Mammary epithelial cell (primary cell): ENCODE measurements at regions of chr13 and their contacts with region 1.

Region 1: DNA sequence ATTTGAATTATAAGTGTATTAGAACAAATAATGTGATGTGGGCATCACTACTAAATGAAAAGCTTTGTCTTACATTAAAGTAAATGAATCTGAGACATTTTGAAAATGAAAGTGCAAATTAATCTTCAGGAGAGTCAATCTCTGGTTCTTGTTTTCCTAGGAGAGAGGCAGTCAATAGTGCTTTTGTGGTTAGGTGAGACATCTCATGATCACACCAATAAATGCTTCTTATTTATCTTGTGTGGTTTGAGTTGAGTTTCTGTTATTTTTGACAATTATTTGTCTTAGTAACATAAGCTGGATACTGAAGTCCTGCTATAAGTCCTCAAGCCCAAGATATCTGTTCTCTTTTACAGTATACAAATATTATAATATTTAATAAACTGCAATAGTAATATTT is 1378.0 kb upstream of the PCDH9 start:
- DNase-seq: no peak
- H3K4me3 ChIP-seq: no peak overlapping the region
- H3K27ac ChIP-seq: no peak overlapping the region
- H3K4me1 ChIP-seq: no peaks in the 10 kb centered on the region
- H3K27me3 ChIP-seq: no peaks in the 10 kb centered on the region
- CTCF ChIP-seq: no peak

Region 2: GRCh38 chr13:68467160-68467559 is 141.0 kb before region 1 on chr13:
- CTCF ChIA-PET with region 1: no interaction called
- dilution Hi-C with region 1: no loop called
- in situ Hi-C with region 1: no loop called
- intact Hi-C with region 1: no loop called
- DNase-seq: no peak
- H3K4me3 ChIP-seq: no peak overlapping the region
- H3K27ac ChIP-seq: no peak overlapping the region
- H3K4me1 ChIP-seq: no peaks in the 10 kb centered on the region
- H3K27me3 ChIP-seq: no peaks in the 10 kb centered on the region
- CTCF ChIP-seq: no peak

Region 3: DNA sequence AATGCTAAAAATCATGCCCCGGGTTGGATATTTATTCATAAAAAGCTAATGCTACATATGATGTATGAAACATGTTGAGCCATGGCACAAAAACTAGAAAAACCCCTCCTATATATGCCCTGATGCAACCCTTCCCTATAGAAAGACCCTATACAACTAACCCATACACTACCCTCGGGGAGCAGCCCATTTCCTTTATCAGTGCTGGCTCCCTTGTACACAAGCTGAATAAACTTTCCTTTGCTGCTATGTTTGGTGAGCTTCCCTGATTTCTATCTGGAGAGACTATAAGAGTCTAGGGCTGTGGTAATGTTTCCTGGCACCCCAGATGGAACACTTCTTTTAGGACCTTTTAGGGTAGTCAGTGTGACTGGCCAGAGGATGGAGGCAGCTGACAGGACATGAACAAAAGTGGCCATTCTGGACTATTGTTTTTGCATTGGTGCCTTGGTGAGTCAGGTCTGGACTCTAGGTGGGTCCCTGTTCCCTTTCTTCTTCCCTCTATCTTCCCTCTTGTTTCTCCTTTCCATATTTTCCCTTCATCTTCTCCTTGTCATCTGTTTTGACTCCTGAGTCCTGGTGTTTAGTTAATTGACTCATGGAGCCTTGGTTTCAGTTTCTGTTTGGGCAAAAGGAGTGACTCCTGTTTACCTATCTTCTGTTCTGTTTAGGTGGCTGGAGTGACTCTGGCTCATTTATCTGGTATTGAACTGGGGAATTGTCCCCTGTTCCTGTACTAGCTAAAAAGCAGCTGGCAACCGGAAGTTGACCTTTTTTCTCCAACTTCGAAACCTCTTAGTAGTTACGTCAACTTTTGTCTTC is 56.2 kb before region 1 on chr13:
- CTCF ChIA-PET with region 1: no interaction called
- dilution Hi-C with region 1: loop called (anchors 10 kb)
- in situ Hi-C with region 1: no loop called
- intact Hi-C with region 1: no loop called
- DNase-seq: no peak
- H3K4me3 ChIP-seq: no peak overlapping the region
- H3K27ac ChIP-seq: no peak overlapping the region
- H3K4me1 ChIP-seq: no peaks in the 10 kb centered on the region
- H3K27me3 ChIP-seq: no peaks in the 10 kb centered on the region
- CTCF ChIP-seq: no peak